ENCODE measurements at regions of chr6 and their contacts with region 1.

Region 1: DNA sequence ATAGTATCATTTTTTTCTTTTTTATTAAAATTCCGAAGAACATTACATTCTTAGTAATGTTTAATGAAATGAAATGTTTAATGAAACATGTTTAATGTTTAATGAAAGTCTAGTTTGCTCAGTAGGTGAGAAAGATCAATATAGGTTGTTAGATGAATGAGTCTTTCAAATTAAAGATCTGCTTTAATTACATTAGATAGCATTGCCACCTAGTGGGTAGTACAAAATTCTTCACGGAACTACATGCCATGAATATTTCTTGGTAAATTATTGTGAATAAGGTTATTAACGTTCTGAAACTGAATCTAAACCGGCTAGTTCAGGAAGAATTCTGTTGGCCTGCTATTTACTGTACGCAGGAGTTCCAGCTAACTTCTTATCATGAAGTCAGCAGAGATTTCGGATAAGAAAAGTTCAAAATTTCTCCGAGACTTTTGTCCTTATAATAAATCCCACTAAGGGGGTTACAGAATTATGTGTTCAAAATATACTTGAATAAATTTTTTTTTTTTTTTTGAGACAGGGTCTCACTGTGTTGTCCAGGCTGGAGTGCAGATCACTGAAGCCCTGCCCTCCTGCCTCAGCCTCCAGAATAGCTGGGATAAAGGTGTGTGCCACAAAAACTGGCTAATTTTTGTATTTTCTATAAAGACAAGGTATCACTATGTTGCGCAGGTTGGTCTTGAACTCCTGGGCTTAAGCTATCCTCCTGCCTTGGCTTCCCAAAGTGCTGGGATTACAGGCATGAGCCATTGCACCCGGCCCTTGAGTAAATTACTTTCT is 7.9 kb upstream of the GMNN start:
- DNase-seq: no peak
- H3K4me3 Mint-ChIP-seq: no peak overlapping the region
- H3K27ac Mint-ChIP-seq: no peak overlapping the region
- H3K4me1 Mint-ChIP-seq: peaks cover 9% of the 10 kb centered on the region
- H3K27me3 Mint-ChIP-seq: no peaks in the 10 kb centered on the region

Region 2: DNA sequence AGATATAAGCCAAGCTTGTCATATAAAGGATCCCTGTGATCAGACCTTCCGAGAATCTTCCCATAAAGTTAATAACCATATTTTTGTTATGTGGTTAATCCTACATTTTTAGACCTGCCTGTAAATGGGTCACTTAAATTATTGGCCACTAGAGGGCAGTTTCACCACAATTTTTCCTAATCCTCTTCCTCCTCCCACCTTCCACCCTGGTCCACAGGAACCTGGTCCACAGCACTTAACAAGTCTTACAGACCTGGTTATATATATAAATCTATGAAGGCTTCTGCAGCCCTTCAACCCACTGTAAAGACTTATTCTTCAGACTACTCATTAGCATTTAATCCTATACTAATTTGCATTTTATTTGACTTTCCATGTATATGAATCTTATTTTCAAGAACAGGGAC is 335.8 kb before region 1 on chr6:
- intact Hi-C with region 1: loop called (anchors 5 kb)
- DNase-seq: no peak
- H3K4me3 Mint-ChIP-seq: no peak overlapping the region
- H3K27ac Mint-ChIP-seq: no peak overlapping the region
- H3K4me1 Mint-ChIP-seq: no peaks in the 10 kb centered on the region
- H3K27me3 Mint-ChIP-seq: no peaks in the 10 kb centered on the region

Region 3: GRCh38 chr6:24696097-24696496 is 70.8 kb before region 1 on chr6:
- intact Hi-C with region 1: loop called (anchors 1 kb)
- DNase-seq: no peak
- H3K4me3 Mint-ChIP-seq: no peak overlapping the region
- H3K27ac Mint-ChIP-seq: no peak overlapping the region
- H3K4me1 Mint-ChIP-seq: peaks cover 27% of the 10 kb centered on the region
- H3K27me3 Mint-ChIP-seq: no peaks in the 10 kb centered on the region

Region 4: DNA sequence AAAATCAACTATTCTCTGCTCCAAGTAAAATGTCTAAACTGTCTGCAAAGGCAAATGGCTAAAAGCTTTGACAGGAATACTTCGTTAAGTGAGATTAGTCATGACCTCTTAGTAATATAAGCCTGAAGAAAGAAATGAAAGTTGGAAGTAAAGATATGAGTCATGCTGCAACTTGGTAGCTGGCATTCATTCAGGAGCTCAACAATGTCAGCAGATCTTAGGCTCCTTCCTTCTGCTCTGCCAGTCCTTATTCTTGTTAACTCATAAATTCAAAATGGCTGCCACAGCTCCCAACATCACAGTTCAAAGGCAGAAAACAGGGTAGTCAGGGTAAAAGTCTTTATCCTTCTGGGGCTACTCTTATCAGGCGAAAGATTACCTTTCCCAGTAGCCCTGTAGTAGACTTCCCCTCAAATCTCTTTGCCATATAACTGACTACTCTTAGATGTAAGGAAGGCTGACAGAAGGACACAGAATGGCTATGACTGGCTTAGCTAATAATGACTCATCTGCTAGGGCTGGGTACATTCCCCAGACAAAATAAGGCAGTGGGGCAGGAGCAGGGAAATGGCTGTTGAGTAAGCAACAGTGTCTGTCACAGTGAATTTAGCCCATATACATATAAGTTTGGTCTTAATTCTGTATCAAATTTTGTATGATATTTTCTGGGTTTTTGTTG is 23.5 kb before region 1 on chr6:
- intact Hi-C with region 1: loop called (anchors 1 kb)
- DNase-seq: no peak
- H3K4me3 Mint-ChIP-seq: no peak overlapping the region
- H3K27ac Mint-ChIP-seq: peak overlapping the region; percentile 63
- H3K4me1 Mint-ChIP-seq: peaks cover 24% of the 10 kb centered on the region
- H3K27me3 Mint-ChIP-seq: no peaks in the 10 kb centered on the region

Measured in activated T-helper 1 cell treated with anti-CD3 and anti-CD28 coated beads, Interleukin-12 subunit alpha, Interleukin-12 subunit beta, Interleukin-2, Interleukin-4 antibody, amounts not matched to agents 30 ng/mL and 10 ng/mL and 1 ng/mL, durations not matched to agents 14 hours and 24 hours and 36 hours (primary cell).